CD8-positive, alpha-beta T cell (primary cell): ENCODE measurements at regions of chr1 and their contacts with region 1.

Region 1: DNA sequence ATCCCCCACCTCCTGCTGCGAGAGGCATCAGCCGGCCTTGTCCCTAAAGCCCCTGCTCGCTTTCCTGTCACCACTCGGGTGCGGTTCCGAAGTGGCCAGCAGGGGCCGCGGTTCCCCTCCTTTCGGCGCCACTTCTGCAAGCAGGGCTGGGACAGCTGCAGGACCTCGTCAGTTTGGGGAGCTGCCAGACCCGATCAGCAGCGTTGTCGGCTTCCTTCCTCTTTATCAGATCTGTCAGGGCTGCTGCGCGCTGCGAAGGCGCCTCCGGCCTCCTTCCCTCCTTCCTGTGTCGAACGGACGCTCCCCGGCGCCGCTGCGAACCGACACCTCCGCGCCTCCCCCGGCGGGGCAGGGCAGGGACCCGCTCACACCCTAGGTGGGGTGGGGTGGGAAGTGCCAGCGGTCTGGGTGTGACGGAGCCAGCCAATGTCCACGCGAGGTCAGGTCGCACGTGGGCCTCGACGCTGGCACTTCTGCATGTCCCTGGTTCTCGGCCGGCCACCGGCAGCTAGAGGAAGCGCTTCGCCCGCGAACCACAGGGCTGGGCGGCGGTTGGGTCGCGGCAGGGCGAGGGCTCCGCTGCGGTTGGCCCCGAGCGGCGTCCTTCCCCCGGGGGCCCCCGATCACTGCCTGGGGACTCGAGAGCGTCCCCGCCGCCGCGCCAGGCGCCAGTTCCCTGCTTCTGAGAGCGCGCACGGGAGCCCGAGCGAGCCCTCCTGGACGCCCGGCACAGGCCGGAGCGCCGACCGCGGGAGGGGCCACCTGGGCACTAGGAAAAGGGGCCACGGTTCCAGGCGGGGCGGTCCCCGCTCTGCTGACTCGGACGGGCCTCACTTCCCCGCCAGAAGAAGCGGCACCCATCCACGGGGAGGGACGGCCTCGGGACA is 81.8 kb downstream of the RUNX3 start:
- DNase-seq: peak; percentile 82 to 96 (median 91)
- ATAC-seq: peak; percentile 92
- H3K4me3 ChIP-seq: peak overlapping the region; percentile 44 to 58
- H3K4me3 Mint-ChIP-seq: peak overlapping the region; percentile 63
- H3K27ac ChIP-seq: peak overlapping the region; percentile 11 to 63
- H3K27ac Mint-ChIP-seq: peak overlapping the region; percentile 79
- H3K4me1 ChIP-seq: peaks cover 19% of the 10 kb centered on the region
- H3K4me1 Mint-ChIP-seq: peaks cover 16% of the 10 kb centered on the region
- H3K27me3 ChIP-seq: no peaks in the 10 kb centered on the region
- H3K27me3 Mint-ChIP-seq: no peaks in the 10 kb centered on the region
- CTCF ChIP-seq: peak; percentile 84

Region 2: DNA sequence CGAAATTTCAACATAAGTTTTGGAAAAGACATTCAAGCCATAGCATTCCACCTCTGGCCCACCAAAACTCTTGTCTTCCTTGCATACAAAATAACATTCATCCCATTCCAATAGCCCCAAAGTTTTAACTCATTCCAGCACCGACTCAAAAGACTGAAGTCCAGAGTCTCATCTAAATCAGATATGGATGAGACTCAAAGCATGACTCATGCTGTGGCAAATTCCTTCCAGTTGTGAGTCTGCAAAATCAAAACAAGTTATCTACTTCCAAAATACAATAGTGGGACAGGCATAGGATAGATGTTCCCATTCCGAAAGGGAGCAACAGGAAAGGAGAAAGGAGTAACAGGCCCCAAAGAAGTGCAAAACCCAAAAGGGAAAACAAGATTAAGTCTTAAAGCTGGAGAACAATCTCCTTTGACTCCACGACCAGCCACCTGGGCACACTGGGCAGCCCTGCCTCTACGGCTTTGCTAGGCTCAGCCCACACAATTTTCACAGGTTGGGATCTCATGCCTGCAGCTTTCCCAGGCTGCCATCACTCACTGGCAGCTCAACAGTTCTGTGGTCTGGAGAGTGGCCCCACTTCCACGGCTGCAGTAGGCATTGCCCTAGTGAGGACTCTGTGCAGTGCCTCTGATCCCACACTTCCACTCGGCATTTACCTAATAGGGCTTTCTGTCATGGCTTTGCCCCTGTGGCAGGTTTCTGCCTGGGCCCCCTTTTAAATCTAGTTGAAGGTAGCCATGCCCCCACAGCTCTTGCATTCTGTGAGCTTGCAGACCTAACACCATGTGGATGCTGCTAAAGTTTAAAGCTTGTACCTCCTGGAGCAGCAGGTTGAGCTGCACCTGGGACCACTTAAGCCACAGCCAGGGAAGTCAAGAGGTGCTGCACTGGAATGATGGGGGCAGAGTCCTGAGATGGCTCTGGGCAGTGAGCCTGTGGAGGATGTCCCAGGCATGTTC is 30.8 kb after region 1 on chr1:
- CTCF ChIA-PET with region 1: no interaction called
- POLR2A ChIA-PET with region 1: no interaction called
- intact Hi-C with region 1: no loop called
- DNase-seq: no peak
- ATAC-seq: no peak
- H3K4me3 ChIP-seq: no peak overlapping the region
- H3K4me3 Mint-ChIP-seq: no peak overlapping the region
- H3K27ac ChIP-seq: no peak overlapping the region
- H3K27ac Mint-ChIP-seq: no peak overlapping the region
- H3K4me1 ChIP-seq: no peaks in the 10 kb centered on the region
- H3K4me1 Mint-ChIP-seq: no peaks in the 10 kb centered on the region
- H3K27me3 ChIP-seq: no peaks in the 10 kb centered on the region
- H3K27me3 Mint-ChIP-seq: no peaks in the 10 kb centered on the region
- CTCF ChIP-seq: no peak

Region 3: DNA sequence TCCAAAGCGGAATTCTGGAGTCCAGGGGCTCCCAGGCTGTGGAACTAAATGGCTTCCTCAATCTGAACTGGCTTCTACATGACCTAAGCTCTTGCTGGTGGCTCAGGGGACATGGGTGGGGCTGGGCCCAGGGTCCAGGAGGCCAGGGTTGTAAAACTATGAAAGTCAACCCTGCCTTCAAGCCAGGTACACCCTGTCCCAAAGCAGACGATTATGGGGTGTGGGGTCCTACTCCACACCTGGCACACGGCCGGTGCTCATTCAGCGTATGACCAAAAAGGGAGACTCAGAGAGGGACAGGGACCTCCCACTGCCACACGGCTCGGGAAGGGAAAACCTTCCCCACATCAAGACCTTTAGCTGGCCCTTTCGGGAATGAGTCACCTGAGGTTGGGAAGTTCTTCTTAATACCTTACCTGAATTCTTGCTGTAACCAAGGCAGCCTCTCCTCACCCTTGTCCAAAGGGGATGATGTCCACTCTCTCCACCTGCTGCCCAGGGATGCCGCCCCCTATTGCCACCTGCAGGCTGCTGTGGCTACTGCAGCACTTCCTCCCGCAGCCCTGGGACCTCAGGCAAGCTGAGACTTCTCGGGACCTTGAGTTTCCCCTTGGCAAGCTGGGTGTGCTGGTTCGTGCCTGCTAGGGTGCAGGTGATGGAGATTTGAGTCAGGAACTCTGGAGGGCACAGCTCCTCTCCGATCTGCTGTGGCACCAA is 49.7 kb after region 1 on chr1:
- CTCF ChIA-PET with region 1: interaction called, 14 read pairs
- POLR2A ChIA-PET with region 1: no interaction called
- intact Hi-C with region 1: loop called (anchors 1 to 2 kb)
- DNase-seq: peak in 7 of 9 experiments; percentile 35 to 75 (median 57)
- ATAC-seq: peak; percentile 52
- H3K4me3 ChIP-seq: no peak overlapping the region
- H3K4me3 Mint-ChIP-seq: no peak overlapping the region
- H3K27ac ChIP-seq: no peak overlapping the region
- H3K27ac Mint-ChIP-seq: peak overlapping the region; percentile 58
- H3K4me1 ChIP-seq: peaks cover 24% of the 10 kb centered on the region
- H3K4me1 Mint-ChIP-seq: peaks cover 36% of the 10 kb centered on the region
- H3K27me3 ChIP-seq: no peaks in the 10 kb centered on the region
- H3K27me3 Mint-ChIP-seq: no peaks in the 10 kb centered on the region
- CTCF ChIP-seq: peak; percentile 72

Region 4: DNA sequence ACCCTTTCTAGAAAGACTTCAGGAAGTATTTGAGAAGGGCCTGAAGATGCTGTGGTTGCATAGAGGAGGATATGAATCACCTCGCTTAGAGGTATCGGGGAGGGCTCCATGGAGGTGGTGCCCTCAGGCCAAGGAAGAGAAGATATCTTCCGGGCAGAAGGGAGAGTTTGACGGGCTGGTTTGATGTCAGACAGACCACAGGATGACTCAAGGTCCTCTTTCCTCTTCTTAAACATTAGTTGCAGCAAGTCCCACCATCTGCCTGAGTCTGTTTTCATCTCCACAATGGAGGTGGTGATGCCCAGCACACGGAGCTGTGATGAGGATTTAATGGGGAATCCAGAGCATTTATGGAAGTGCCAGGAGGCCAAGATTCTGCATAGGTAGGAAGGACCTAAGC is 106.9 kb after region 1 on chr1:
- CTCF ChIA-PET with region 1: interaction called, 13 read pairs
- POLR2A ChIA-PET with region 1: no interaction called
- intact Hi-C with region 1: no loop called
- DNase-seq: peak in 8 of 9 experiments; percentile 56 to 88 (median 72)
- ATAC-seq: peak; percentile 82
- H3K4me3 ChIP-seq: peak overlapping the region in 1 of 2 experiments; percentile 2
- H3K4me3 Mint-ChIP-seq: peak overlapping the region; percentile 37
- H3K27ac ChIP-seq: peak overlapping the region in 1 of 2 experiments; percentile 23
- H3K27ac Mint-ChIP-seq: peak overlapping the region; percentile 93
- H3K4me1 ChIP-seq: peaks cover 76% of the 10 kb centered on the region
- H3K4me1 Mint-ChIP-seq: peaks cover 83% of the 10 kb centered on the region
- H3K27me3 ChIP-seq: no peaks in the 10 kb centered on the region
- H3K27me3 Mint-ChIP-seq: no peaks in the 10 kb centered on the region
- CTCF ChIP-seq: no peak

Region 5: DNA sequence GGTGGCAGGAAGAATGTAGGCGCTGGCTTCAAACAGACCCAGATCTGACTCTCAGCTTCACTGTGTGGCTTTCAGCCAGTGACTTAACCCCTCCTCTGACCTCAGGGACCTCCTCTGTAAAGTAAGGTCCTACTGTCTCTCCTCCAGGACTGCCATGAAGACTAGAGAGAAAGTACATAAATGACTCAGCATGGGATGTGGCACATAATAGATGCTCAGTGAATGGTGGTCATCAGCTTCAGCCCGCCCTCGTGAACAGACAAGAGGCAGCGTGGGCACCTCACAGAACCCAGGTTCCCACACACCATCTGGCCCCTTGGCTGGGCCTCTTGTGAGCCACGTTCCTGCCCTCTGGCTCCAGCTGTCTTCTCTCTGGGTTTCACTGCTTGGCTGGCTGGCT is 258.1 kb after region 1 on chr1:
- CTCF ChIA-PET with region 1: interaction called, 41 read pairs
- POLR2A ChIA-PET with region 1: interaction called, 3 read pairs
- intact Hi-C with region 1: loop called (anchors 1 kb)
- DNase-seq: peak in 1 of 9 experiments; percentile 36
- ATAC-seq: no peak
- H3K4me3 ChIP-seq: no peak overlapping the region
- H3K4me3 Mint-ChIP-seq: no peak overlapping the region
- H3K27ac ChIP-seq: no peak overlapping the region
- H3K27ac Mint-ChIP-seq: no peak overlapping the region
- H3K4me1 ChIP-seq: peaks cover 45% of the 10 kb centered on the region
- H3K4me1 Mint-ChIP-seq: peaks cover 35% of the 10 kb centered on the region
- H3K27me3 ChIP-seq: no peaks in the 10 kb centered on the region
- H3K27me3 Mint-ChIP-seq: no peaks in the 10 kb centered on the region
- CTCF ChIP-seq: no peak

Region 6: DNA sequence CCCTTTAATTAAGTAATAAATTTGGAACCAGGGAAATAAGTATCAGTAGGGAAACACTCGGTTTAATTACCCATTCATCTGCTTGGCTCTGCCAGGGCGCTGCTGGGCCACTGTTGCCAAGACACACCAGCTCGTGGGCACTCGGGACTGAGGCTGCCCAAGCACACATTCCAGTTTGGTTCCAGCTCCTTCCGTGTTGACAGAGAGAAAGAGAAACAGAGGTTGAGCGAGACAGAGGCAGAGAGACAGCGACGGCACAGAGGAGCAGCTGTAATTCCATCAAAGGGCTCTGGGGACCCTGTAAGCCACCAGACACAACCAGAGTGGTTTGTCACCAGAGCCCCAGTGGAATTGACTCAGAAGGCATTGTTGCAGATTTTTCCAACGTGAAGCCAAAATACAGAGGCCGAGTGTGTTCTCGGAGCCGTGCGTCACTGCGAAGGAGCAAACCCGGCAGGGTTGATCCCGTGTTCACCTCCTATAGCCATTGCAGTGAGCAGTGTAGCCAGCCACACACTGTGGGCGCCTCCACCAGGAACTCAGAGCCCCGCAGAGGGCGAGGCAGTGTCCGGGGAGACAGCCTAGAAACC is 350.5 kb after region 1 on chr1:
- CTCF ChIA-PET with region 1: interaction called, 48 read pairs
- POLR2A ChIA-PET with region 1: no interaction called
- intact Hi-C with region 1: no loop called
- DNase-seq: peak in 5 of 9 experiments; percentile 20 to 50 (median 39)
- ATAC-seq: peak; percentile 91
- H3K4me3 ChIP-seq: no peak overlapping the region
- H3K4me3 Mint-ChIP-seq: peak overlapping the region; percentile 57
- H3K27ac ChIP-seq: no peak overlapping the region
- H3K27ac Mint-ChIP-seq: peak overlapping the region; percentile 80
- H3K4me1 ChIP-seq: peaks cover 24% of the 10 kb centered on the region
- H3K4me1 Mint-ChIP-seq: peaks cover 24% of the 10 kb centered on the region
- H3K27me3 ChIP-seq: no peaks in the 10 kb centered on the region
- H3K27me3 Mint-ChIP-seq: peaks cover 4% of the 10 kb centered on the region
- CTCF ChIP-seq: peak; percentile 8